Mammary epithelial cell (primary cell): ENCODE measurements at regions of chr4 and their contacts with region 1.

Region 1: GRCh38 chr4:68368691-68369480 is 19.0 kb upstream of the YTHDC1 start:
- DNase-seq: peak; percentile 89
- H3K4me3 ChIP-seq: peak overlapping the region in 2 of 3 experiments; percentile 8 to 20
- H3K27ac ChIP-seq: peak overlapping the region; percentile 90
- H3K4me1 ChIP-seq: peaks cover 30% of the 10 kb centered on the region
- H3K27me3 ChIP-seq: no peaks in the 10 kb centered on the region
- CTCF ChIP-seq: no peak

Region 2: DNA sequence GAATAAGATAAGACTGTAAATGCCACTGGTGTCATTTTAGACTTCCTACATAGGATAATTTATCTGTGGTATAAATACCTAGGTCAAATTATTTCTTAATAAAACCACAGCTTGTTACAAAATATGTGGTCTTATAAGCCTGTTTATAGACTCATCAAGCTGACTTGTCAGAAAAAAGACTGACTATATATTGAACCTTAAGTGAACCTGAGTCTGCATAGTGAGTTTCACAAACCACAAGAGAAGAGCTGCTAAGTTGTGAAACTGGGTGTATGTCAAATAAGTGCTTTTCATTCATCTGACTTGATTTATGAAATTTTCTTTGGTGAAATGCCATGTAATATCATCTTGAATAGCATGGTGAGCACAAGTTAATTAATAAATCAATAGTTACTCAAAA is 357.2 kb before region 1 on chr4:
- CTCF ChIA-PET with region 1: no interaction called
- dilution Hi-C with region 1: no loop called
- in situ Hi-C with region 1: no loop called
- intact Hi-C with region 1: no loop called
- DNase-seq: peak; percentile 46
- H3K4me3 ChIP-seq: no peak overlapping the region
- H3K27ac ChIP-seq: no peak overlapping the region
- H3K4me1 ChIP-seq: no peaks in the 10 kb centered on the region
- H3K27me3 ChIP-seq: no peaks in the 10 kb centered on the region
- CTCF ChIP-seq: no peak

Region 3: GRCh38 chr4:68291256-68291655 is 77.6 kb before region 1 on chr4:
- CTCF ChIA-PET with region 1: no interaction called
- dilution Hi-C with region 1: no loop called
- in situ Hi-C with region 1: no loop called
- intact Hi-C with region 1: no loop called
- DNase-seq: no peak
- H3K4me3 ChIP-seq: no peak overlapping the region
- H3K27ac ChIP-seq: no peak overlapping the region
- H3K4me1 ChIP-seq: no peaks in the 10 kb centered on the region
- H3K27me3 ChIP-seq: no peaks in the 10 kb centered on the region
- CTCF ChIP-seq: no peak

Region 4: GRCh38 chr4:68445111-68445510 is 76.2 kb after region 1 on chr4:
- CTCF ChIA-PET with region 1: no interaction called
- dilution Hi-C with region 1: no loop called
- in situ Hi-C with region 1: no loop called
- intact Hi-C with region 1: no loop called
- DNase-seq: no peak
- H3K4me3 ChIP-seq: no peak overlapping the region
- H3K27ac ChIP-seq: no peak overlapping the region
- H3K4me1 ChIP-seq: peaks cover 9% of the 10 kb centered on the region
- H3K27me3 ChIP-seq: no peaks in the 10 kb centered on the region
- CTCF ChIP-seq: no peak

Region 5: GRCh38 chr4:69707807-69708206 is 1338.9 kb after region 1 on chr4:
- CTCF ChIA-PET with region 1: no interaction called
- dilution Hi-C with region 1: no loop called
- in situ Hi-C with region 1: no loop called
- intact Hi-C with region 1: loop called (anchors 10 kb)
- DNase-seq: peak; percentile 92
- H3K4me3 ChIP-seq: peak overlapping the region in 1 of 3 experiments; percentile 12
- H3K27ac ChIP-seq: peak overlapping the region; percentile 68
- H3K4me1 ChIP-seq: peaks cover 15% of the 10 kb centered on the region
- H3K27me3 ChIP-seq: no peaks in the 10 kb centered on the region
- CTCF ChIP-seq: no peak